ENCODE measurements at regions of chr7 and their contacts with region 1.

Region 1: GRCh38 chr7:140175221-140176121 is 1.3 kb downstream of the KDM7A start:
- DNase-seq: peak; percentile 95
- ATAC-seq: peak; percentile 76

Region 2: GRCh38 chr7:140062528-140063299 is 112.8 kb before region 1 on chr7 and contains the start of gene PARP12:
- intact Hi-C with region 1: loop called (anchors 5 kb)
- DNase-seq: peak; percentile 96
- ATAC-seq: peak; percentile 91
- total RNA-seq, gene PARP12: 10.5 TPM

Region 3: DNA sequence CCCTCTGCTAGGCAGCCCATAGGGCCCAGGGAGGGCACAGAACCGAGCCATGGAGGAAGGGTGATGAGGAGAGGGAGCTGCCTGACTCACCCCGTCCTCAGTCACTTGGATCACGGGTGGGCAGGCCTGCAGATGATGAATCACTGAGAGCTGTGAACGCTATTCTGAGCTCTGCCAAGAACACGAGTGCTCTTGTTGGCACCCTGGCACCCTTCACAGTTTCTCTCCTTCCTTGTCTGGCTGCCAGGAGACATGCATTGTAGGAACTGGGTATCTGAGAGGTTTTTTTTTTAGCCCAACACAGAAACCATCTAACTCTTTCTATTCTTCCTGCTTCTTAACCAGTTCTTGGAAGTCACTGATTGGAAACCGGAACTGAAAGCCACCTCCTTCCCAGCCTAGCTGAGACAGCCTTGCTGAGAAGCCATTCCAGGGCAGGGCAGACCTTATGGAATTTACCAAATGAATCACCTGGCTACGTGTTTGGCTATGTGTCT is 140.7 kb after region 1 on chr7:
- intact Hi-C with region 1: loop called (anchors 10 kb)
- DNase-seq: peak; percentile 65
- ATAC-seq: peak; percentile 90

Measured in Right ventricle myocardium superior (tissue), 1 donor.